ENCODE measurements at regions of chr10 and their contacts with region 1.

Region 1: DNA sequence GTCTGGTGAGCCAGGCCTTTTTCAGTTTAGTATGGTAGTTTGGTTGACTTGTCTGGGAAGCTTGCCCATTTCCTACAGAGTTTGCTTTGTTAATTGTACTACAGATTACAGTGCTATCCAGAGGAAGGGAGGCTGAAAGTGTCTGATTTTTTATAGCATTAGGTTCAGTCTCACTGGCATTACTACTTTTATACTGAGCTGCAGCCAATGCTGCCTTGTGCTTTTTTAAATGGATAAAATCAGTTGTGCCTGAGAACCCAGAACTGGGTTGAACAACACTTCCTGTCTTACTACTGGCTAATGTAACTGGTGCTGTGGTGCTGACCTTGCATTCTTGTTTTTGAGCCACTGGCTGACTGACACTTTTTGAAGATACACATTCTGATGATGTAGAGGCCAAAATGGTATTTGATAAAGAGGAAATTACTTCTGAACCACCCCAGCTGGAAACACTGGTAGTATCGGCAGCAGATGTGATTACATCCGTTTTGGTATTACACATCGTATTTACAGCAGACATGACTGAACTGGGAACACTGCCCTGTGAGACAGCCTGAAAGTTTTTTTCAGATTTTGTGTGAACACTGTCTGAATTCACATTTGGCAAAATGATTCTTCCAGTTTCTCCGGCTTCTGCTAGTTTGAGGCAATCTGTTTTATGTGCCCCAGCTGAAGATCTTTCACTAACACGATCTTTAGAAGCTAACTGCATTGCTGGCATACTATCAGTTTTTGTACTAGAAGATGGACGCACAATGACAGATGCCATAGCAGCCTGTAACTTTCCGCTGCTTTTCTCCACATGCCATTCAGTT is 74.1 kb downstream of the NRBF2 start:
- DNase-seq: peak; percentile 36
- ATAC-seq: peak; percentile 51
- H3K4me3 ChIP-seq: no peak overlapping the region; the same call in 1 of the 2 replicates
- H3K27ac ChIP-seq: peak overlapping the region; percentile 75
- H3K4me1 ChIP-seq: peaks cover 32% of the 10 kb centered on the region
- H3K27me3 ChIP-seq: no peaks in the 10 kb centered on the region
- CTCF ChIP-seq: no peak
- EP300 ChIP-seq: no peak
- POLR2A ChIP-seq: no peak; the same call in 1 of the 2 replicates
- RAD21 ChIP-seq: no peak

Region 2: GRCh38 chr10:63192826-63193225 is 14.4 kb before region 1 on chr10:
- CTCF ChIA-PET with region 1: no interaction called
- POLR2A ChIA-PET with region 1: no interaction called
- RAD21 ChIA-PET with region 1: no interaction called
- SMC1A ChIA-PET with region 1: no interaction called
- in situ Hi-C with region 1: no loop called
- intact Hi-C with region 1: no loop called
- DNase-seq: no peak
- ATAC-seq: no peak
- H3K4me3 ChIP-seq: no peak overlapping the region
- H3K27ac ChIP-seq: no peak overlapping the region
- H3K4me1 ChIP-seq: no peaks in the 10 kb centered on the region
- H3K27me3 ChIP-seq: no peaks in the 10 kb centered on the region
- CTCF ChIP-seq: no peak
- EP300 ChIP-seq: no peak
- POLR2A ChIP-seq: no peak
- RAD21 ChIP-seq: no peak

Region 3: GRCh38 chr10:63286754-63287264 is 79.6 kb after region 1 on chr10:
- CTCF ChIA-PET with region 1: interaction called, 3 read pairs
- POLR2A ChIA-PET with region 1: interaction called, 3 read pairs
- RAD21 ChIA-PET with region 1: interaction called, 4 read pairs
- SMC1A ChIA-PET with region 1: interaction called, 10 read pairs
- in situ Hi-C with region 1: no loop called
- intact Hi-C with region 1: no loop called
- DNase-seq: peak; percentile 66
- ATAC-seq: peak; percentile 83
- H3K4me3 ChIP-seq: peak overlapping the region; percentile 19; the same call in 1 of the 2 replicates
- H3K27ac ChIP-seq: peak overlapping the region; percentile 73
- H3K4me1 ChIP-seq: peaks cover 32% of the 10 kb centered on the region
- H3K27me3 ChIP-seq: no peaks in the 10 kb centered on the region
- CTCF ChIP-seq: no peak
- EP300 ChIP-seq: peak; percentile 24 to 69; a peak in 1 of 4 replicates
- POLR2A ChIP-seq: no peak
- RAD21 ChIP-seq: no peak

Region 4: GRCh38 chr10:63376560-63377304 is 169.5 kb after region 1 on chr10:
- CTCF ChIA-PET with region 1: no interaction called
- POLR2A ChIA-PET with region 1: no interaction called
- RAD21 ChIA-PET with region 1: no interaction called
- SMC1A ChIA-PET with region 1: no interaction called
- in situ Hi-C with region 1: no loop called
- intact Hi-C with region 1: loop called (anchors 5 kb)
- DNase-seq: peak; percentile 64
- ATAC-seq: peak; percentile 98
- H3K4me3 ChIP-seq: peak overlapping the region; percentile 8
- H3K27ac ChIP-seq: peak overlapping the region; percentile 47
- H3K4me1 ChIP-seq: peaks cover 7% of the 10 kb centered on the region
- H3K27me3 ChIP-seq: no peaks in the 10 kb centered on the region
- CTCF ChIP-seq: no peak
- EP300 ChIP-seq: 0 out of 4 replicates have a peak, but pooled peaks of 1 of the 2 experiments have one; percentile 30
- POLR2A ChIP-seq: no peak
- RAD21 ChIP-seq: no peak

Region 5: DNA sequence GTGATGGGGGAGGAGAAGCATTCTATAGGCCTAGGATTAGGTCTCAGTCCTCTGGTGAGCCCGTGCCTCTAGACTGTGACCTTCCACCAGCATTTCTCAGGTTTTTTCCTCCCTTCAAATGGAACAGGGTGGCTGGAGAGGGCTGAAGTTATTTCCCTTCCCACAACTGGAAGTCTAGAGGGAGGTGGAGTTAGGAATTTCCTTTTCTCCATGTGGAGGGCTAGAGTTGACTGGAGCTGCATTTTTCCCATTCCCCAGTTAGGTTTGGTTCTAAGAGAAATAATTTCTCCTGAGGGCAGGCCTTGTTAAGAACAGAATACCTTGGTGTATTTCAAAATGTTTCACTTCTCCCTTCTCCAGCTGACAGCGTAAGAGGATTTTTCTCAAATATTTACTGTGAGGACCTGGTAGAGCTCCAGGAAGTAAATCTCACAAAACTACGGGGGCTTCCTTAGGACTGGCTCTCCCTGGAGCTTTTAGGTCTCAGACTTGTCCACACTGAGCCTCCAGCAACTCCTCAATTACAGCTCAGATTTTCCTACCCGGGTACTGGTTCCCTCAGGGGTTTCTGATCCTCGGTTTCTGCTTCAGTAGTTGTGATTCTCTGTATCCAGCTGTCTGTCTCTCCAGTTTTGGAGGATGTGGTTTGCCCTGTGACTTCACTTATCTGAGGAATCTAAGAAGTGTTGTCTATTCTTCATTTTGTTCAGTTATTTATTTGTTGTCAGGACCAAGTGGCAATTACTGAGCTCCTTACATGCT is 308.0 kb after region 1 on chr10:
- CTCF ChIA-PET with region 1: no interaction called
- POLR2A ChIA-PET with region 1: interaction called, 3 read pairs
- RAD21 ChIA-PET with region 1: interaction called, 3 read pairs
- SMC1A ChIA-PET with region 1: no interaction called
- in situ Hi-C with region 1: no loop called
- intact Hi-C with region 1: loop called (anchors 5 kb)
- DNase-seq: no peak
- ATAC-seq: peak; percentile 10
- H3K4me3 ChIP-seq: 0 out of 2 replicates have a peak overlapping the region, but pooled peaks have one; percentile 18
- H3K27ac ChIP-seq: peak overlapping the region; percentile 50
- H3K4me1 ChIP-seq: peaks cover 13% of the 10 kb centered on the region; the same call in 1 of the 2 replicates
- H3K27me3 ChIP-seq: no peaks in the 10 kb centered on the region
- CTCF ChIP-seq: no peak
- EP300 ChIP-seq: no peak
- POLR2A ChIP-seq: no peak
- RAD21 ChIP-seq: no peak